ENCODE measurements at regions of chr12 and their contacts with region 1.

Region 1: DNA sequence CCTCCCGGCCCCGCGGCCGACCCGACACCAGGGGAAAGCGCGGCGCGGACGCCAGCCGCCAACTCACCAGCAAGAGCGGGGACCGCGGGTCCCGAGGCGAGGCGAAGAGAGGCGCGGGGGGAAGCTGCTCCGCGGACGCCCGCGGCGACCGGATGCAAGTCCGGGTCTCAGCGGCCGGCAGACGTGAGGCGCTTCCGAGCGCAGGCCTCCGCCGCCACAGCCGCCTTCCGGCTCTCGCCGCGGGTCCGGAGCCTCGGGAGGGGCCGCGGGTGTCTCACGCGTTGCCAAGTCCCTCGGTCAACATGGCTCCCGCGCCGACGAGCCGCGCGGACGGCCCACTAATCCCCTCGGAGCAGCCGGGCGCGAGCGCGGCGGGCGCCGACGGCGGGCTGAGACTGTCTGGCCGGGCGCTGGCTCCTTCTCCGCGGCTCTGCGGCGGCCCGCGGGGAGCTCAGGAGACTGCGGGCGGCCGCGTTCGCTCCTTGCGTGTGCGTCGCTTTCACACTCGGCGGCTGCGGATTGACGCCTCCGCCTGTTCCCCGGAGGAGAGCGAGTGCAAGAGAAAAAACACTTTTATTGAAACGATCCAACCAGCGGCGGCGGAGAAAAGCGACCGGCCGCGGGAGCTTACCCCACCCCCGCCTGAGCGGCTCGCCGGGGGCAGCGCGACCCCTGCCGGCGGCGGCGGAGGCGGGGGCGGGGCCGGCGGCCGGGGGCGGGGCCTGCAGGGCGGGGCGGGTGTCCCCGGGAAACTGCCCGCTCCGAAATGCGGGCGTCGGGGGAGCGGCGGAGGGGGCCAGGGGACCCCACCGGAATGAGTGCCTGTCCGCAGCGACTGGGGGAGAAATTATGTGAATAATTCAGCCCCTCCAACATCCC is at the start of gene CDK17:
- H3K4me3 ChIP-seq: peak within 1 kb of the TSS; percentile 95
- H3K27ac ChIP-seq: peak within 1 kb of the TSS; percentile 99
- H3K4me1 ChIP-seq: peaks cover 4% of the 10 kb centered on the region; the same call in 1 of the 2 replicates
- CTCF ChIP-seq: no peak

Region 2: DNA sequence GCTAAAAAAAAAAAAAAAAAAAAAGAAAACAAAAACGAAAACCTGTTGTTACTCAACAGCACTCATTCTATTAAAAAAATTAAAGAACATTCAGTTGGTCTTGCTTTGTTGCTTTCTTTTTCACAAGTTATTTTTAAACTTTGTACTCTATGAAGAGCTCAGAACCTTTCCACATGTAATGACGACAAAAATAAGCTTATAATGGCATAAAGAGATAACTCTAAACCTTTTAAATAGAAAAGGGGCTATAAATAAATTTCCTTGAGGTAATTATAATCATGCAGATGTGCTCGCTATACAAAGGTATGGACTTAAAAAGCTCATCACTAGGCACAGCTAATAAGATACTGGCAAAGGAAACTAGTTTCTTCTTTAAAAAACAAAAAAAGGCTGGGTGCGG is 1340.2 kb before region 1 on chr12:
- CTCF ChIA-PET with region 1: no interaction called
- POLR2A ChIA-PET with region 1: interaction called, 11 read pairs
- H3K4me3 ChIP-seq: no peak overlapping the region
- H3K27ac ChIP-seq: no peak overlapping the region
- H3K4me1 ChIP-seq: no peaks in the 10 kb centered on the region
- CTCF ChIP-seq: no peak

Region 3: GRCh38 chr12:95733141-95733825 is 666.9 kb before region 1 on chr12:
- CTCF ChIA-PET with region 1: no interaction called
- POLR2A ChIA-PET with region 1: no interaction called
- H3K4me3 ChIP-seq: no peak overlapping the region
- H3K27ac ChIP-seq: peak overlapping the region; percentile 47
- H3K4me1 ChIP-seq: peaks cover 10% of the 10 kb centered on the region
- CTCF ChIP-seq: no peak

Region 4: DNA sequence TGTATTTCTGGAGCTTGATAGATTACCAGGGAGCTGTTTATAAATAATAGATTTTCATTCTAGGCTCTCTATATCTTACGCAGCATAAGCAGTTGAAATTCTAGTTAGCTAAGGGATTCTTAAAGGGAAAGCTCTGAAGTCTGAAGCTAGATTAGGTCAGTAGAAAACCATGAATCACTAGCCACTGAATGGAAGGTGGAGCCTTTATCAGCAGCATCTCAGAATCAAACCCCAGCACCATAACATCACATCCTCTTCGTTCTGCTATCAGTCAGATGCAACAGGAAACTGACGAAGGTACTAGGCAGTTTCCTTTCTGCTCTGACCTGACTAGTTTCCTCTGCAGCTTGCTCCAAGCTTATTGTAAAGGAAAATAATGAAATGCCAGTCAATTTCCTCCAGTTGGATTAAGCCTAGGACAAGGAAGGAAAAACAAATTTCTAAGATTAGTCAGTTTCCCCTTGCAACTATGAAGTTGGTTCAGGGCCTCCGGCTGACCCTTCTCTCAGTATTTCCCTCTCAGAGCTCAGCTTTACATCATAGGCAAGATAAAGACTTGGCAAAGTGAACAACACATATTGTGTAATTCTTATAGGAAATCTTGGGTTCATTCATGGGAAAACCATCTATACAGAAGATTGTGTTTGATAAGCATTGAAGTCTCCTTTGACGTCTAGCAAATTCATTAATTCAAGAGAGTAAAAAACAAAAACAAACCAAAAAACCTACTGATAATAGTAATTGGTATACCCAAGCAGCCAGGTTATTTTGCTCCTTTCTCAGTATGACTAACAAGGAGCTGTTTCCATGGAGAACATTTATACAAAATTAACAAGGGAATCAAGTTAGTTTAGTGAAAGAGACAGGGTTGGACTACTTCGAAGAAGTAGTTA is 45.8 kb after region 1 on chr12:
- CTCF ChIA-PET with region 1: no interaction called
- POLR2A ChIA-PET with region 1: no interaction called
- H3K4me3 ChIP-seq: no peak overlapping the region
- H3K27ac ChIP-seq: no peak overlapping the region
- H3K4me1 ChIP-seq: no peaks in the 10 kb centered on the region
- CTCF ChIP-seq: no peak